ENCODE measurements at regions of chr5 and their contacts with region 1.

Region 1: DNA sequence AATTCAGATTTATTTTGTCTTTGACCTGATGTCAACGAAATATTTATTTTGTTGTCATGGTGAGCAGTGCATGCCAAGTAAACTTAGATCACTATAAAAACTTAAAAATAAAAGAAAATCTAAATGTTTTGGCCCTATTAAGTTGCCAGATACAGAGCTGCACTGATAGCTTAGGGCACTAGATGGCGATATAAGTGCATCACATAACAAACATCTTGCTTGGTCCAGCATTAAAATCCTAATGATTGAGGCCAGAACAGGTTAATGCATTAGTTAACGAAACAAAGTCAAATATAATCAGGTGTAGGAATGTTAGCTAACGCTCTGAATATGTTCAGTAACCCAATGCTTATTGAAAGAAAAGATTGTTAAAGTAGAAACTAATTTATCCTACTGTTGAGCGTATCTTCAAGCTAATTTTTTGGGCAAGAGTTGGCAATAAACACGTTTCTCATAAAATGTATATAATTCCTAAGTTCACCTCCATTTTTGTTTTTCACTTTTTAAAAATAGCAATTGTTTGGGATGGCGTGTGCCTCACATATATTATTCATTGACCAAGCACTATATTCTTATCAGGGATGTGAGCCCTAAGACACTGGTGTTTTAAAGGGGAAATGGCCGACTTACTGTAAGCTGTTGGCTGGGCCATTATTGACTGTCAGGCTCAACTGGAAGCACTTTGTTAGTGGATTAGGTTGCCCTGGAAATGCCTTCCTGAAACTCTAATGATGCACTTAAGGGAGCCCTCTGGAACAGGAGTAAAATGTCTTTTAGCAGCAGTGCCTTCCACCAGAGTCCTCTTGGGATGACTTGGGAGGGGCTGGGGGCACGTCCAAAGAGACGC is 33.3 kb downstream of the KCTD16 start:
- DNase-seq: peak; percentile 34
- CTCF ChIP-seq: peak; percentile 73

Region 2: DNA sequence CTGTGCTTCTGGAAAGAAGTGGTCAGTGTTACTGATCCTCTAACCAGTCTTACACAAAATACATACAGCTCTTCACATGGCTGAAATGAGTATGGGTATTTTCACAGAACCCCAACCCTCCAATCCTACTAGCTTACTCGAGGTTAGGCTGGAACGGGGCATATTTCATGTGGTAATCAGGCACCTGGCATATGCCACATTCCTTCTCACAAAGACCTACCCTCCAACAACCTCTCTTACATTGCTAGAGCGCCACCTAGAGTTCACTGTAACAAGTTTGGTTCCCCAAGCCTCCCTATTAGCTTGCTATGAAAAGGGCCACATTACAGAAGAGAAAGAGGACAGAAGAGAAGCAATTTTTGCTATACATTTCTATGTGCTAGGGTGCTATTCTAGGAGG is 1033.9 kb after region 1 on chr5:
- in situ Hi-C with region 1: loop called (anchors 25 kb)
- DNase-seq: peak; percentile 12
- CTCF ChIP-seq: peak; percentile 32

Region 3: DNA sequence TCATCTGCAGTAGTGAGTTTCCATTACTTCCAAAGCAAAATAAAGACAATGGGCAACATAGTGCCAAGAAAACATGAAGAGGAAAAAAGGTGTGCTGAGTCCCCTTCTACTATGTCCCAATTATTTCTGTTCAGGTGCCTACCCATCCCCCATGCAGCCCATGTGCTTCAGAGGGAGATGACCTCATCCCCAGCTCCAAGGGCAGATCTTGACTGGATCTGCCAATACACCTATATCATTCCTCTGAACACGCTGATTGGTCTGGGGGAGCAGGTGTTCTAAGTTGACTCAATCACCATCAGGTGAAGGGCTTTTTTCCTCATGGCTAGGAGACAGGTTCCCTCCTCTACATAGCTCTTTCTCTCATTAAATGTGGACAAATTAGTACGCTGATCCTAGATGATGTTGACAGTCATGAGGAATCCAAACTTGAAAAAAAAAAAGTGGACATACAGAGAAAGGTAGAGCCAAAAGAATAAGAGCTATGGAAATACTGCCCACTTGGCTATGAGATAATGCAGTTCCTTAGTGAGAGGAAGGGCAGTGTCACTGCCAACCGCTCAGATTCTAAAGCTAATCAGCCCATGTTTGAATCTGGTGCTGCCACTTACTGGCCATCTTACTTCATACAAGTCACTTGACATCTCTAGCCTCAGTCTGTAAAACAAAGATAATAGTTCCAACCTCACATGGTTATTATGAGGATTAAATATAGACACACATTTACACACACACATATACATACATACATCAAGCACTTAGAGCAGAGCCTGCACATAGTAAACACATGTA is 1608.1 kb after region 1 on chr5:
- in situ Hi-C with region 1: loop called (anchors 25 kb)
- DNase-seq: no peak
- CTCF ChIP-seq: no peak

Measured in GM13976 (cell line).